ENCODE measurements at regions of chr18 and their contacts with region 1.

Region 1: GRCh38 chr18:58529714-58530354 is 99.1 kb downstream of the ALPK2 start:
- DNase-seq: peak; percentile 82
- ATAC-seq: peak; percentile 78
- H3K4me3 ChIP-seq: no peak overlapping the region
- H3K4me3 Mint-ChIP-seq: no peak overlapping the region
- H3K27ac ChIP-seq: no peak overlapping the region
- H3K27ac Mint-ChIP-seq: no peak overlapping the region
- H3K4me1 ChIP-seq: peaks cover 24 to 30% of the 10 kb centered on the region in 2 donors
- H3K4me1 Mint-ChIP-seq: peaks cover 38% of the 10 kb centered on the region
- H3K27me3 ChIP-seq: no peaks in the 10 kb centered on the region
- H3K27me3 Mint-ChIP-seq: no peaks in the 10 kb centered on the region
- CTCF ChIP-seq: peak; percentile 90

Region 2: DNA sequence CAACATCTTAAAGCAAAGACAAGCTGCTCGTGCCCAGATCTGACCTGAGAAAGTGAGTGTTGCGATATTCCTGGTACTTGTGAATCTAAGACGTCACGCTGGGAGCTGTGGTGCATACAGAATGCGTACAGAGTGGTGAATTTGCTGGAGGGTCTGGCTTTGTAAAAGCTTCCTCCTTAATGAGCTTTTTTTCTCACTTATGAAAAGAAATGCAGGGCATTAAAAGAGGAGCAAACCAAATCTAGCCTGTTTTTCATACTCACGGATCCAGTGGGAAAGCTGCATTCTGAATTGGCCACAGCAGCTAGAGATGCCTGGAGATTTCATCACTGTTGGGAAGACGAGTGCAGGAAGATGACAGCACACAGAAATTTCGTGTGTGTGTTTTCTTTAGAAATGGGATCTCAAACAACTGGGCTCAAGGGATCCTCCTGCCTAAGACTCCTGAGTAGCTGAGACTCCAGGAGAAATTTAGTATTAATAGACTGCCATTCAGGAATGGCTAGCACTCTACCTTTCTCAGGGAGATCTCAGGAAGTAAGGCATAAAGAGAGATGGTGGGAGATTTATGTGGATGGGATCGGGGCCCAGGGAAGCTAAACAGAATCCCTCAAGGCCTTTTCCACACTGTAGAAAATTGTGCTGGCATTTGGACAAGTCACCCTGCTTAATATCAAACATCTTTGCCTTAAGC is 82.3 kb before region 1 on chr18:
- CTCF ChIA-PET with region 1: no interaction called
- POLR2A ChIA-PET with region 1: no interaction called
- intact Hi-C with region 1: no loop called
- DNase-seq: no peak
- ATAC-seq: no peak
- H3K4me3 ChIP-seq: no peak overlapping the region
- H3K4me3 Mint-ChIP-seq: no peak overlapping the region
- H3K27ac ChIP-seq: no peak overlapping the region
- H3K27ac Mint-ChIP-seq: no peak overlapping the region
- H3K4me1 ChIP-seq: no peaks in the 10 kb centered on the region
- H3K4me1 Mint-ChIP-seq: no peaks in the 10 kb centered on the region
- H3K27me3 ChIP-seq: no peaks in the 10 kb centered on the region
- H3K27me3 Mint-ChIP-seq: peaks cover 10% of the 10 kb centered on the region
- CTCF ChIP-seq: no peak

Region 3: DNA sequence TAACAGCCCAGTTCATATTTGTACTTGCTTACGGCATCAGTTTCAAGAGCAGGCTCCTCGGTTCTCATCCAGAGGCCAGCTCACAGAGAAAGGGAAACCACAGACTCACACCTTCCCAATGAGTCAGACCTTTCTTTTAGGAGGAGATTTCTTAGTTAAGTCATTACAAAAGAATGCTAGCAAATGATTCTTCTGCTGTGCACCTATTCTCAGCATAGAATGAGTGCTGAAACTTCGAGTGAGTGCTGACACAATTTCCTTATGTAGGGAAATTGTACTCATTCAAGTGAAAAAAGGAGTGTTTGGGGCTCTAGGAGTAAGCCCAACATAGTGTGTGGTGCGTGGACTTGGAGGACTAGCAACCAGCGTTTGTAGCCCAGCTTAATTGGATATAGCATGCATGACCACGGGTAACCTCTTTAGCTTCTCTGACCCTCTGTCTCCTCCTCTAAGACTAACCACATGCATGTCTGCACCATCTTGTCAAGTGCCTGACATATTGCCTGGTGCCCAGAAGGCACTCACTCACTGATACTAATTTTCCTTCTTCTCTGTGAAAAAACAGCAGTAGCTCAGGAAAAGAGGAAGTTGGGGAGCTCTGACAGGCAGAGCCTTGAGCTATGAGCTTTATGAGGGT is 12.1 kb after region 1 on chr18:
- CTCF ChIA-PET with region 1: interaction called, 25 read pairs
- POLR2A ChIA-PET with region 1: no interaction called
- intact Hi-C with region 1: no loop called
- DNase-seq: peak; percentile 64
- ATAC-seq: peak; percentile 67
- H3K4me3 ChIP-seq: no peak overlapping the region
- H3K4me3 Mint-ChIP-seq: no peak overlapping the region
- H3K27ac ChIP-seq: no peak overlapping the region
- H3K27ac Mint-ChIP-seq: peak overlapping the region; percentile 26
- H3K4me1 ChIP-seq: peaks cover 37 to 44% of the 10 kb centered on the region in 2 donors
- H3K4me1 Mint-ChIP-seq: peaks cover 54% of the 10 kb centered on the region
- H3K27me3 ChIP-seq: no peaks in the 10 kb centered on the region
- H3K27me3 Mint-ChIP-seq: no peaks in the 10 kb centered on the region
- CTCF ChIP-seq: no peak

Region 4: GRCh38 chr18:58567453-58568196 is 37.8 kb after region 1 on chr18:
- CTCF ChIA-PET with region 1: interaction called, 10 read pairs
- POLR2A ChIA-PET with region 1: interaction called, 3 read pairs
- intact Hi-C with region 1: loop called (anchors 5 kb)
- DNase-seq: no peak
- ATAC-seq: no peak
- H3K4me3 ChIP-seq: no peak overlapping the region
- H3K4me3 Mint-ChIP-seq: no peak overlapping the region
- H3K27ac ChIP-seq: no peak overlapping the region
- H3K27ac Mint-ChIP-seq: no peak overlapping the region
- H3K4me1 ChIP-seq: peaks cover 8 to 9% of the 10 kb centered on the region in 2 donors
- H3K4me1 Mint-ChIP-seq: peaks cover 25% of the 10 kb centered on the region
- H3K27me3 ChIP-seq: no peaks in the 10 kb centered on the region
- H3K27me3 Mint-ChIP-seq: no peaks in the 10 kb centered on the region
- CTCF ChIP-seq: no peak

Region 5: DNA sequence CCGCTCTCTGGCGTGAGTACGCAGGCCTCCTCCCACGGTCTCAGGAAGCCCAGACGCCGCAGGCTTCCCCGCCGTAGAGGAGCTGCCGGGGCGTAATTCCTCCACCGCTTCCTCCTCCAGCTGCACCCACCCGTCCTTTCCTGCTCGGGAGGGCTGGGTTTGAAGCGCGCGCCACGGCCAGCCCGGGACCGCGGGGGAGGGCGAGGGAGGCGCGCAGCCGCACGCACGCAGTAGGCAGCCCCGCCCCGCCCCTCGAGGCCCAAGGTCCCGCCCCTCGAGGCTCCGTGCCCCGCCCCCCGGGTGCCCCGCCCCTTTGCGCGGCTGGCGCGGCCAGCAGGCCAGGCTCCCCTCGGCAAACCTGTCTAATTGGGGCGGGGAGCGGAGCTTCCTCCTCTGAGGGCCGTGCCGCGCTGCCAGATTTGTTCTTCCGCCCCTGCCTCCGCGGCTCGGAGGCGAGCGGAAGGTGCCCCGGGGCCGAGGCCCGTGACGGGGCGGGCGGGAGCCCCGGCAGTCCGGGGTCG is 141.3 kb after region 1 on chr18 and contains the start of gene MALT1:
- CTCF ChIA-PET with region 1: interaction called, 40 read pairs
- POLR2A ChIA-PET with region 1: interaction called, 4 read pairs
- intact Hi-C with region 1: loop called (anchors 1 kb)
- DNase-seq: peak; percentile 94
- ATAC-seq: peak; percentile 86
- H3K4me3 ChIP-seq: peak within 1 kb of the TSS; percentile 84 to 92 (median 87)
- H3K4me3 Mint-ChIP-seq: peak within 1 kb of the TSS; percentile 97
- H3K27ac ChIP-seq: peak within 1 kb of the TSS; percentile 73 to 88
- H3K27ac Mint-ChIP-seq: peak within 1 kb of the TSS; percentile 97
- H3K4me1 ChIP-seq: peaks cover 47 to 48% of the 10 kb centered on the region in 2 donors
- H3K4me1 Mint-ChIP-seq: peaks cover 63% of the 10 kb centered on the region
- H3K27me3 ChIP-seq: no peaks in the 10 kb centered on the region
- H3K27me3 Mint-ChIP-seq: no peaks in the 10 kb centered on the region
- CTCF ChIP-seq: no peak
- total RNA-seq, gene MALT1: 81.2 and 95.6 TPM in 2 replicates

Region 6: GRCh38 chr18:58716060-58716756 is 186.4 kb after region 1 on chr18:
- CTCF ChIA-PET with region 1: interaction called, 13 read pairs
- POLR2A ChIA-PET with region 1: no interaction called
- intact Hi-C with region 1: loop called (anchors 2 kb)
- DNase-seq: peak; percentile 57
- ATAC-seq: peak; percentile 73
- H3K4me3 ChIP-seq: peak overlapping the region in 1 of 5 experiments; percentile 5
- H3K4me3 Mint-ChIP-seq: peak overlapping the region; percentile 62
- H3K27ac ChIP-seq: peak overlapping the region in 1 of 2 donors; percentile 82
- H3K27ac Mint-ChIP-seq: peak overlapping the region; percentile 70
- H3K4me1 ChIP-seq: peaks cover 23 to 34% of the 10 kb centered on the region in 2 donors
- H3K4me1 Mint-ChIP-seq: peaks cover 40% of the 10 kb centered on the region
- H3K27me3 ChIP-seq: no peaks in the 10 kb centered on the region
- H3K27me3 Mint-ChIP-seq: no peaks in the 10 kb centered on the region
- CTCF ChIP-seq: no peak

Region 7: DNA sequence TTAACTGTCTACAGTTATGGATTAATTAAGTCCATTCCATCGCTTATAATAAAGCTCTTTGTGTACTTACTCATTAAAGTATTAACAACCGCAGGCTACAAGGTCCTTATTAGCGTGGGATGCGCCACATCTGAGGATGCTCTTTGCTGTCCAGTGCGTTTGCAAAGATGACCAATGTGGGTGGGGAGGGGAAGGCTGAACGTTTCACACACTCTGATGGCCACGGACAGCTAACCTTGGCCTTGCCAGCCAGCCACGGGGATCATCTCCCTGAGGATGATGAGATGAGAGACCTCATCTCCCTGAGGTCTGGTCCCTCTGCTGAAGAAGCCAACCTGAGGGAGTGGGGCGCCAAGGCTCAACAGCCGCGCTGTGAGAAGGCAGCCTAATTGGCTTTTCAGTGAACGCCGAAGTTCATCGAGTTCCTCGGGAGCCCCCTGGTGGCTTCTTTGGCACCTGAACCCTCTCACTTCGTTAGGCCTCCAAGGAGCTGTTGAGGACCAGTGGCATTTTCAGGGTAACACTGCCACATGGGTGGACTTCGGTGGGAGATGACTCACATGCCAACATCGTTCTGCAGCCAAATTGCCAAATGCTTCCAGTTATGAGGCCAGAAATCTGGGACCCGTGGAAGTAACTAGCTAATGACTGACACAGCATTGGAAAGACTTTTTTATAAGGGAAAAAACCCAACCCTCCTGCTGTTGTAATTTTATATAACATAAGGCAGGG is 540.5 kb after region 1 on chr18:
- CTCF ChIA-PET with region 1: interaction called, 12 read pairs
- POLR2A ChIA-PET with region 1: no interaction called
- intact Hi-C with region 1: loop called (anchors 5 kb)
- DNase-seq: peak; percentile 85
- ATAC-seq: peak; percentile 90
- H3K4me3 ChIP-seq: no peak overlapping the region
- H3K4me3 Mint-ChIP-seq: no peak overlapping the region
- H3K27ac ChIP-seq: no peak overlapping the region
- H3K27ac Mint-ChIP-seq: no peak overlapping the region
- H3K4me1 ChIP-seq: peaks cover 12 to 20% of the 10 kb centered on the region in 2 donors
- H3K4me1 Mint-ChIP-seq: peaks cover 14% of the 10 kb centered on the region
- H3K27me3 ChIP-seq: no peaks in the 10 kb centered on the region
- H3K27me3 Mint-ChIP-seq: no peaks in the 10 kb centered on the region
- CTCF ChIP-seq: peak; percentile 90

Measured in B cell (primary cell).